Activated CD8-positive, alpha-beta T cell treated with anti-CD3 and anti-CD28 coated beads, Interleukin-2, amount 10 ng/mL, durations not matched to agents 7 days and 5 days (primary cell): ENCODE measurements at regions of chr6 and their contacts with region 1.

Region 1: GRCh38 chr6:73732845-73733675 is 37.1 kb downstream of the CD109 start:
- DNase-seq: peak; percentile 84
- ATAC-seq: peak; percentile 89
- H3K4me3 Mint-ChIP-seq: no peak overlapping the region
- H3K27ac Mint-ChIP-seq: no peak overlapping the region
- H3K4me1 Mint-ChIP-seq: peaks cover 8% of the 10 kb centered on the region
- H3K27me3 Mint-ChIP-seq: no peaks in the 10 kb centered on the region

Region 2: GRCh38 chr6:73653571-73654424 is 79.3 kb before region 1 on chr6 and contains the start of gene SLC17A5:
- CTCF ChIA-PET with region 1: interaction called, 12 read pairs
- POLR2A ChIA-PET with region 1: interaction called, 3 read pairs
- DNase-seq: peak; percentile 93
- ATAC-seq: peak; percentile 91
- H3K4me3 Mint-ChIP-seq: peak within 1 kb of the TSS; percentile 99
- H3K27ac Mint-ChIP-seq: peak within 1 kb of the TSS; percentile 97
- H3K4me1 Mint-ChIP-seq: peaks cover 22% of the 10 kb centered on the region
- H3K27me3 Mint-ChIP-seq: no peaks in the 10 kb centered on the region
- total RNA-seq, gene SLC17A5: 5.0 to 5.7 TPM

Region 3: DNA sequence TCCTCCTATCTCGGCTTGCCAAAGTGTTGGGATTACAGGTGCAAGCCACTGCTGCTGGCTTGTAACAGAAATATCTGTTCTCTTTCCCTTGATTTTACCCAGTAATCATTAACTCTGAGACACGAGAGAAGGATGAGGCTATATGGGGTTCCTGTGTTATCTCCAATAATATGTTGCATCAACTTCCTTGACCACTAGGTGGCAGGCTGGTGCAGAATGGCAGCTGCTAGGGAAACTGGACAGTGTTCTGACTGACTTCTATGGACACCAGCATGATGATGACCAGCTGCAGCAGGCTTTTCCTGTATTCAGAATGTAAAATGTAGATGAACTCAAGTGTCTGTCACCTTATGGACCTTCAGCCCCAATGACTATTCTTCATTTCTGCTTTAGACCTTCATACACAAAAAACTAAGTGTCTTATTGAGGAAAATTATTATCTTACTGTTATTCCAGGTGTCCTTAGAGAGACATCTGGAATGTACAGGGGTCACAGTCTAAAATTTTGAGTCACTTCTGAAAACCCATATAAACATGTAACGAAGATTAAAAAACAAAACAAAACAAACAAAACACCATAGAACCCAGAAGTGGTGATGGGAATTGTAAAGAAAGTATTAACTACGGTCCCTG is 57.5 kb before region 1 on chr6:
- CTCF ChIA-PET with region 1: interaction called, 105 read pairs
- POLR2A ChIA-PET with region 1: no interaction called
- DNase-seq: peak; percentile 81
- ATAC-seq: peak; percentile 94
- H3K4me3 Mint-ChIP-seq: no peak overlapping the region
- H3K27ac Mint-ChIP-seq: no peak overlapping the region
- H3K4me1 Mint-ChIP-seq: peaks cover 3% of the 10 kb centered on the region
- H3K27me3 Mint-ChIP-seq: peaks cover 20% of the 10 kb centered on the region

Region 4: DNA sequence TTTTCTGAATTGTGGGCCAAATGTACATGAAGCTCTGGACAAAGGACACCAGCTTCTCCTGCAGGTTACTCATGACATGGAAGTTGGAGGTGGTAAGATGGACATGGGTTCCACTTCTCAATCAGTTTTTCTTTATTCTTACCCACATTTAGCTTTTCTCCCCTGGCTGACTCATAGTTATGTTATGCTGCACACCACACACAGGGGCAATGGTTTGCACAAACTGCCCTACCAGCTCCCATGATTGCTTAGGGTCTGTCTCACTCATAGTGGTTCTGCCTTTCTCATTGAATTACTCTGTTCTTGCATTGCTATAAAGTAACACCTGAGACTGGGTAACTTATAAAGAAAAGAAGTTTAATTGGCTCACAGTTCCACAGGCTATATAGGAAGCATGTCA is 41.5 kb before region 1 on chr6:
- CTCF ChIA-PET with region 1: interaction called, 21 read pairs
- POLR2A ChIA-PET with region 1: no interaction called
- DNase-seq: no peak
- ATAC-seq: no peak
- H3K4me3 Mint-ChIP-seq: no peak overlapping the region
- H3K27ac Mint-ChIP-seq: no peak overlapping the region
- H3K4me1 Mint-ChIP-seq: peaks cover 14% of the 10 kb centered on the region
- H3K27me3 Mint-ChIP-seq: peaks cover 15% of the 10 kb centered on the region

Region 5: DNA sequence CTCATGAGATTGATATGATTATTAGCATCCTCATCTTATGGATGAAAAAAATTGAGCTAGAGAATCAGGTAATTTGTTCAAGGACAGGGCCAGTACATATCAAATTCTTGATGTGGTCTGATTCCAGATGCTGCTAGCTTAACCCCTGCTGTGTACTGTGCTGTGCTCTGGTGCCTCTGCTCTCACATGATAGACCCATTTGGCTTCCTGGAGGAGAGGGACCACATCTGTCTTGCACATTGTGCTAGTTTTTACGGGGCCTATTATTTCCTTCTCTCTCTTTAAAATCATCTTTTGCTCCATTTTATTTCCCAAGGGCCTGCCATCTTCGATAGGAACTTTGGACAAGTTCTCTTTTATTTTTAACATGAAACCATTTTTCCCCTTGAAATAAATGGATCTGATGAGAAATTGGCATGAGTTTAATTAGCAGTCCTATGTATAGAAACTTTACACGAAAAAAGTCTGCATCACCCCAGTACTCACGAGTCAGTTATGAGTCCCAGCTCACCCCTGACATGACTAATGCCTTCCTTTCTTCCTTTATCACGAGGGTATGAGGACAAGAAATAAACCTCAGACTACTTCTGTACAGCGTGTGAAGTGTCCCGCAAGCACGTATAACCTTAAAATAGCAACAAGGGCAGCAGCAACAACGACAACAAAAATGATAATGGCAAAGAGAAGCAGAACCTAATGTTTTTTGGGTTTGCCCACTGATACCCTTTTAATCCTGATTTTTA is 10.6 kb before region 1 on chr6:
- CTCF ChIA-PET with region 1: interaction called, 30 read pairs
- POLR2A ChIA-PET with region 1: no interaction called
- DNase-seq: peak; percentile 36
- ATAC-seq: peak; percentile 89
- H3K4me3 Mint-ChIP-seq: no peak overlapping the region
- H3K27ac Mint-ChIP-seq: peak overlapping the region; percentile 24
- H3K4me1 Mint-ChIP-seq: peaks cover 20% of the 10 kb centered on the region
- H3K27me3 Mint-ChIP-seq: no peaks in the 10 kb centered on the region

Region 6: DNA sequence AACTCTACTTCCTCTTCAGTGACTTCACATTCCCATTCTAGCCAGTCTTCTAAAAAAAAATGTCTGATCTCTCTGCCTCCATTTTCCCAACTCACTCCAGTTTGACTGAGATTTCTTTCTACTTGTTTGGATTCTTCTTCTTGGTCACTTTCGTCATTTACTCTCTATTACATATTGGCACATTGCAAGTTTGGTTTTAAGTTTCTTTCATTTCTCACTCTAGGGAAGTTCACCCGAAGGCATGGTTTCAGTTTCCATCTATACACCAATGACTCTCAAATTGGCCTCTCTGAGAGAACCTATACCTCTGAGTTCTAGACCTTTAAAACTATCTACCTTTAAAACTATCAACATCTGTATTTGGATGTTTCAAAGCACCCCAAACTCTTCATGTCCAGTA is 14.2 kb after region 1 on chr6:
- CTCF ChIA-PET with region 1: interaction called, 13 read pairs
- POLR2A ChIA-PET with region 1: no interaction called
- DNase-seq: no peak
- ATAC-seq: peak; percentile 88
- H3K4me3 Mint-ChIP-seq: no peak overlapping the region
- H3K27ac Mint-ChIP-seq: no peak overlapping the region
- H3K4me1 Mint-ChIP-seq: no peaks in the 10 kb centered on the region
- H3K27me3 Mint-ChIP-seq: peaks cover 4% of the 10 kb centered on the region